PC-9 (cell line): ENCODE measurements at regions of chr5 and their contacts with region 1.

Region 1: GRCh38 chr5:65760504-65761275 is 38.7 kb downstream of the NLN start:
- DNase-seq: peak; percentile 36 to 41
- H3K4me3 ChIP-seq: no peak overlapping the region
- H3K27ac ChIP-seq: no peak overlapping the region
- H3K4me1 ChIP-seq: no peaks in the 10 kb centered on the region
- H3K27me3 ChIP-seq: no peaks in the 10 kb centered on the region
- CTCF ChIP-seq: no peak; the same call in 1 of the 2 replicates

Region 2: DNA sequence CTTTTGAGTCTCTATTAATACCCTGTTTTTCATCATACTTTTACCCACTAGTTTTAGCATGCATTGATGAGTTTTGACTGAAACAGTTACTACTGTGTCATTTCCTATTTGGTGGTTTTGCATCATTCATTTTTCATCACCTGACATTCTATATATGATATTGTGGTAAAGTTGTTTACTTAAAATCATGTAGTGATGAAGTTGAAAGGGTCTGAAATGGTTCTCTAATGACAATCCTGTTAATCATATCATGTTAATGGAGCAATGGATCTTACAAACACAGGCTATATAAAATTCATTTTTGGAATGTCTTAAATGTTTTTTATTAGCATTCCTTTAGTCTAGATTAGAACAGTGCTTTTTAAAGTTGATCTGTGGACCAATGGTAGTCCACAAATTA is 249.8 kb after region 1 on chr5:
- CTCF ChIA-PET with region 1: no interaction called
- POLR2A ChIA-PET with region 1: no interaction called
- intact Hi-C with region 1: loop called (anchors 10 kb)
- DNase-seq: no peak
- H3K4me3 ChIP-seq: no peak overlapping the region
- H3K27ac ChIP-seq: 0 out of 2 replicates have a peak overlapping the region, but pooled peaks have one; percentile 9
- H3K4me1 ChIP-seq: no peaks in the 10 kb centered on the region
- H3K27me3 ChIP-seq: no peaks in the 10 kb centered on the region
- CTCF ChIP-seq: no peak